Left ventricle myocardium superior (tissue), 1 donor: ENCODE measurements at regions of chr16 and their contacts with region 1.

Region 1: DNA sequence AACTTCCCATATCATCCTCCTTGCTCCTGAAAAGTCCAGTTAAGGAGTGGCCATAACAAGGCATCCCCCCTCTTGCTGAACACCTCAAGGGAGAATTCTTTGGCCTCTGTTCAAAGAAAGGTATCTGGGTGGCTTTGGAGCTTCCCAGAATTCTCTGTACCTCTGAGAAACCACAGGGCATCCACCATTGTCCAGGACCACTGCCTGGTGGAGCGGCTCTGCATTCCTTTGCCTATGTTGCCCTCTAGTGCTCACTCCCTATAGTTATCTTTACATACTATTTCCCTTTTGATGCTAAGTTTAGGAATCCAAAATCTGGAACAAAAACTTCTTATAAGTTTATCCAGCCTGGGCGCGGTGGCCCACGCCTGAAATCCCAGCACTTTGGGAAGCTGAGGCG is 30.3 kb downstream of the CHD9NB start:
- DNase-seq: no peak
- ATAC-seq: peak; percentile 78

Region 2: DNA sequence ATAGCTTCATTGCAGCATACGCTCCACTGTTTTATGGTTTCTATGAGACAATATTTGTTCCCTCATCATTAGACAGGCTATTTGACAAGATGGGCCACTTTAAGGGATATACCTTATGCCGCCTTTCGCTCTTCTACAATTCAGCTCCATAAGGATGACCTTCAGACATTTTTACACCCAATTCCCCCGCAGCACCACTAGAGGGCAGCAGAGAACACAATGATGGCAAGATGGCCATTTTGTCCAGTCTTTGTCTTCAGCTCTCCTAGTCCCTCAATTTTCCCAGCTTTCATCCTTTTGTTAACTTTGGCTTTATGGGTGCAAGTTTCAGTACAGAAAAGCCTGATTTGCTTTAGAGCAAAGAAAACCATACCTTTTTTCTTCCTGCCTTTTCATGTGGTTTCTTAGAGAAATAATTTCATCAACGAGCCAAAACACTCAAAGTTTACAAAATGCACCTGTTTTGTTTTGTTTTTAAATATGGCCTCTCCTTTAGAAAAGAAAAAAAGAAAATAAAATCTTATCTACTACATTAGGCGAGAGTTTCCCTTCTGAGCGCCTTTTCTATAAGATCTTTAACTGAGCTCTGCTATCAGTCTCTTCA is 830.7 kb before region 1 on chr16:
- intact Hi-C with region 1: loop called (anchors 5 kb)
- DNase-seq: peak; percentile 40
- ATAC-seq: no peak

Region 3: DNA sequence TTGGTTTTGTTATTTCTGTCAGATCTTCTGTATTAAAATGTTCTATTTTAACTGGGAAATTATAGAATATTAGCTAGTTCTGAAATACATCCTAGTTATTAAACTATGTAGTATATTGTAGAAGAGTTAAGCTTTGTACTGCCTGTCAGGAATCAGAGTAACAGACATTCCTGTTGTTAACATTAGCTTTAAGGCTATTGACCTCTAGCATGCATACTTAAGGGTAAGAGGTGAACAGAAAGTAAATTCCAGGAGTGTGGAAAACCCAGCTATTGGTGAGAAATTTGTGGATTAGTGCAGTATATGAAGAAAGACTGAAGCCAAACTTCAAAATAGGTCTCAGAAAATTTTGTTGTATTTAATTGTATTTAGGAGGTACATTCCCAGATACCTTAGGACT is 143.7 kb after region 1 on chr16:
- intact Hi-C with region 1: no loop called
- DNase-seq: no peak
- ATAC-seq: no peak

Region 4: GRCh38 chr16:53291757-53292392 is 269.5 kb after region 1 on chr16:
- intact Hi-C with region 1: no loop called
- DNase-seq: no peak
- ATAC-seq: no peak

Region 5: DNA sequence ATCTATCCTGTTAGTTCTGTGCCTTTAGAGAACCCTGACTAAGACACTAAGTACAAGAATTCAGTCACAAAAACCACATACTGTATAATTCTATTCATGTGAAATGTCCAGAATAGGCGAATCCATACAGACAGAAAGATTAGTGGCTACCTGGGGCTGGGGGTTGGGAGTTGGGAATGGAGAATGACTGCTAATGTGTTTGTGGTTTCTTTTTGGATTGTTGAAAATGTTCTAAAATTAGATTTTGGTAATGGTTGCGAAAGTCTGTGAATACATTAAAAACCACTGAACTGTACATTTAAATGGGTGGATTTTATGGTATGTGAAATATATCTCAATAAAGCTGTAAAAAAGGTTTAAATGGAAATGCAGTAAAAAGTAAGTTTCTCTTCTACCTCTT is 561.0 kb after region 1 on chr16:
- intact Hi-C with region 1: no loop called
- DNase-seq: no peak
- ATAC-seq: no peak